CD8-positive, alpha-beta T cell (primary cell): ENCODE measurements at regions of chr16 and their contacts with region 1.

Region 1: DNA sequence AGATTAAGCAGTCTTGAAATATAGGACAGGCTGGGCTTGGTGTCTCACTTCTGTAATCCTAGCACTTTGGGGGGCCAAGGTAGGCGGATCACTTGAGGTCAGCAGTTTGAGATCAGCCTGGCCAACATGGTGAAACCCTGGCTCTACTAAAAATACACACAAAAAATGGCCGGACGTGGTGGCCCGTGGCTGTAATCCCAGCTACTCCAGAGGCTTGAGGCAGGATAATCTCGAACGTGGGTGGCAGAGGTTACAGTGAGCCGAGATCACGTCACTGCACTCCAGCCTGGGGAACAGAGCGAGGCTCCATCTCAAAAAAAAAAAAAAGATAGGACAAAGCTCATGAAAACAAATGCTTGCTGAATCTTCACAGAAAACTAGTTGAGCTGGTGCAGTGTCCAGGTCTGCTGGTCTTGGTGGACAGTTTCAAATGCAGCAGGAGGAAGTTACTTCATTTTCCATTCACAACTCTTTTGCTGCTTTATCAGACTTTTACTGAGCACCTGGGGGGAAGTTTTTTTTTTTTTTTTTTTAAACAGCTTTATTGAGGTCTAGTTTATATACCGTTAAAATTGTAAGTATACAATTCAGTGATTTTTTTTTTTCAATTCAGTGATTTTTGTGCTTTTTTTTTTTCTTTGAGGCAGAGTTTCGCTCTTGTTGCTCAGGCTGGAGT is 45.2 kb downstream of the SNX29 start:
- DNase-seq: no peak
- ATAC-seq: no peak
- H3K4me3 ChIP-seq: no peak overlapping the region
- H3K4me3 Mint-ChIP-seq: no peak overlapping the region
- H3K27ac ChIP-seq: no peak overlapping the region
- H3K27ac Mint-ChIP-seq: no peak overlapping the region
- H3K4me1 ChIP-seq: no peaks in the 10 kb centered on the region
- H3K4me1 Mint-ChIP-seq: peaks cover 4% of the 10 kb centered on the region
- H3K27me3 ChIP-seq: no peaks in the 10 kb centered on the region
- H3K27me3 Mint-ChIP-seq: no peaks in the 10 kb centered on the region
- CTCF ChIP-seq: no peak

Region 2: DNA sequence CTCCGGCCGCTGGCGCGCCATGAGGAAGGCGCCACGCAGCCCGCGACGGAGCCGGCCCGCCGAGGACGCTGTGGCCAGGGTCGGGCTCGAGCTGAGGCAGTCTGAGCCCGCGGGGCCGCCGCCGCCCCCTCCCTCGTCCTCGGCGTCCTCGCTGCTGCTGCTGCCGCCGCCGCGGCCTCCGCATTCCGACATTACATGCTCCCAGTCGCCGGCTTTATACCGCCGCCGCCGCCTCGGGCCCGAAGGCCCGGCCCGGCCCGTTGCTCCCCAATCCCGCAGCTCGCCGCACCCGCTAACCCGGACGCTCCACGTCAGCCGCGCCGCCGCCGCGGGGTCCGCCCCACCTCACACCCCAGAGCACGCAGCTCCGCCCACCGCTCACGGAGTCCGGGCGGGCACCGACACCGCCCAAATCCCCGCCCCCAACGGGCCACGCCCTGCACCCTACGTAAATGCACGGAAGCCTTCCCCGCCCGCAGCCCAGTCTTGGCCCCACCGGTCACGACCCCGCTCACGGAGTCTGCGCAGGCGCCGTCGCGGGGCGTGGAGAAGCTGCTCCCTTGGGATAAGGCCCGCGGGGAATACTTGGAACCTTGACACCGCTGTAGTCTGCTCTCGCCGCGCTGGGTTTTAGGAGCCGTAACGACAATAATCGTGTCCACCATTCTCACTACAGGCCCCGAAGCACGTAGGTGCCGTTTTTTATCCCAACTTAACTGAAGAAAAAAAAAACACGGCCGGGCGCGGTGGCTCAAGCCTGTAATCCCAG is 279.0 kb before region 1 on chr16 and contains the start of gene TXNDC11:
- CTCF ChIA-PET with region 1: no interaction called
- POLR2A ChIA-PET with region 1: no interaction called
- intact Hi-C with region 1: no loop called
- DNase-seq: peak; percentile 99 to 100 (median 99)
- ATAC-seq: peak; percentile 96
- H3K4me3 ChIP-seq: peak within 1 kb of the TSS; percentile 63 to 78
- H3K4me3 Mint-ChIP-seq: peak within 1 kb of the TSS; percentile 95
- H3K27ac ChIP-seq: peak within 1 kb of the TSS; percentile 79 to 95
- H3K27ac Mint-ChIP-seq: peak within 1 kb of the TSS; percentile 98
- H3K4me1 ChIP-seq: peaks cover 30% of the 10 kb centered on the region
- H3K4me1 Mint-ChIP-seq: peaks cover 48% of the 10 kb centered on the region
- H3K27me3 ChIP-seq: no peaks in the 10 kb centered on the region
- H3K27me3 Mint-ChIP-seq: no peaks in the 10 kb centered on the region
- CTCF ChIP-seq: no peak
- total RNA-seq, gene TXNDC11: 118 to 130 TPM

Region 3: DNA sequence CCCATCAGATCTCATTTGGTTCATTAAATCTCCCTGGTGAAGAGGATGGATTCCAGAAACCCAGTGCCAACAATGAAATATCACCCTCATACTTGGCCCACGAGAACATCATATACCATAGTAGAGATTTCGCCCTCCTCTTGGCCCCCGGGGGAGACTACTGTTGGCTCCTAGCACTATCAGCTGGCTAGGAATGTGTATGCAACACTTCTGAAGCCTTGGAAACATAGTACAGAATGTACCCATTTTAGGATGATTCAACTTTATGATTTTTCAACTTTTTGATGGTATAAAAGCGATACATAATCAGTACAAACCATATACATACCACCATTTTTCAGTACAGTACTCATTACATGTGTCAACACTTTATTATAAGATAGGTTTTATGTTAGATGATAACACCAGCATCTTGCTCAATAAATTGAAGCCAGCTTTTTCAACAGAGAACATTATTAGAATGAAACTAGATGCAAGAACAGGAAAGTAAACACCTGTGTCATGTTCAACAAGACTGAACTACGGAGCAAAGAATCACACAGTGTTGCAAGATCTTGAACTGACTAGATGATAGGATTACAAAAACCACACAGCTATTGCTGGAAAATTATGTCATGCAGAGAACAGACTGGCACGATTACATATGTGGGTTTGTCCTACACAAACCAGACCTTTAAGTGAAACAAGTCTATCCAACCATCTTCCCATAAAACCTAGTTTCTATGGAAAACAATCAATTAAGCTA is 187.6 kb before region 1 on chr16:
- CTCF ChIA-PET with region 1: no interaction called
- POLR2A ChIA-PET with region 1: interaction called, 11 read pairs
- intact Hi-C with region 1: no loop called
- DNase-seq: no peak
- ATAC-seq: no peak
- H3K4me3 ChIP-seq: no peak overlapping the region
- H3K4me3 Mint-ChIP-seq: no peak overlapping the region
- H3K27ac ChIP-seq: no peak overlapping the region
- H3K27ac Mint-ChIP-seq: no peak overlapping the region
- H3K4me1 ChIP-seq: no peaks in the 10 kb centered on the region
- H3K4me1 Mint-ChIP-seq: no peaks in the 10 kb centered on the region
- H3K27me3 ChIP-seq: no peaks in the 10 kb centered on the region
- H3K27me3 Mint-ChIP-seq: no peaks in the 10 kb centered on the region
- CTCF ChIP-seq: no peak

Region 4: GRCh38 chr16:12323007-12323758 is 301.5 kb after region 1 on chr16:
- CTCF ChIA-PET with region 1: no interaction called
- POLR2A ChIA-PET with region 1: no interaction called
- intact Hi-C with region 1: no loop called
- DNase-seq: peak in 6 of 9 experiments; percentile 1 to 62 (median 44)
- ATAC-seq: peak; percentile 62
- H3K4me3 ChIP-seq: no peak overlapping the region
- H3K4me3 Mint-ChIP-seq: no peak overlapping the region
- H3K27ac ChIP-seq: peak overlapping the region; percentile 39 to 71
- H3K27ac Mint-ChIP-seq: peak overlapping the region; percentile 78
- H3K4me1 ChIP-seq: peaks cover 12% of the 10 kb centered on the region
- H3K4me1 Mint-ChIP-seq: peaks cover 11% of the 10 kb centered on the region
- H3K27me3 ChIP-seq: no peaks in the 10 kb centered on the region
- H3K27me3 Mint-ChIP-seq: no peaks in the 10 kb centered on the region
- CTCF ChIP-seq: no peak